OCI-LY7 (cell line): ENCODE measurements at regions of chr1 and their contacts with region 1.

Region 1: DNA sequence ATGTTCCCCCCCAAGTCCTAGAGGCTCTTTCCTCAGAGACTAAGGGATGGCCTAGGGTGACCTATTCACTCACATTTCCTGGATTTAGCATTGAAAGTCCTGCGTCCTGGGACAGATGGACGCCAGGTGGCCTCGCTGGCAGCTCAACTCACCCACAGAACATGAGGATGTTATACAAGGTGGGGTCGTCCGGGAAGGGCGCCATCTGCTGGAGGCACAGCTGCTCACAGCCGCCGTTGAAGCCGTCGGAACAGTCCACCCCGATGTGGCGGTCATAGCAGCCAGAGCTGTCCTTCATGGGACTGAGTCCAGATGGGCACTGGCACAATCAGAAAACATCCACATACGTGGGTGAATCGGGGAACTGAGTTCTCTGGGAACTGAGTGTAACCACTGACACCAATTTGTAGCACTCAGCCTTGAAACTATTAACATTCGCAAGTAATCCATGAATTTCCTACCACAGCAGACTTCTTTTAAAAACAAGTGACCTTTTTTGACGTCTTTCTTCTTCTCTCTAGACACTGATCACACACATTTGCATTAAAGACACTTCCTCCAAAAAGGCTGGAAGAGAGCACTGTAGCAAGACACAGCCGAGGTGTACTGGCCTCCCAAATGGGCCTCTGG is 215.4 kb downstream of the ASTN1 start:
- DNase-seq: peak; percentile 26
- H3K4me3 ChIP-seq: no peak overlapping the region
- H3K27ac ChIP-seq: no peak overlapping the region
- H3K4me1 ChIP-seq: no peaks in the 10 kb centered on the region
- CTCF ChIP-seq: peak; percentile 80

Region 2: GRCh38 chr1:176959191-176959820 is 10.2 kb after region 1 on chr1:
- CTCF ChIA-PET with region 1: no interaction called
- POLR2A ChIA-PET with region 1: no interaction called
- intact Hi-C with region 1: no loop called
- DNase-seq: no peak
- H3K4me3 ChIP-seq: no peak overlapping the region
- H3K27ac ChIP-seq: no peak overlapping the region
- H3K4me1 ChIP-seq: no peaks in the 10 kb centered on the region
- CTCF ChIP-seq: no peak

Region 3: DNA sequence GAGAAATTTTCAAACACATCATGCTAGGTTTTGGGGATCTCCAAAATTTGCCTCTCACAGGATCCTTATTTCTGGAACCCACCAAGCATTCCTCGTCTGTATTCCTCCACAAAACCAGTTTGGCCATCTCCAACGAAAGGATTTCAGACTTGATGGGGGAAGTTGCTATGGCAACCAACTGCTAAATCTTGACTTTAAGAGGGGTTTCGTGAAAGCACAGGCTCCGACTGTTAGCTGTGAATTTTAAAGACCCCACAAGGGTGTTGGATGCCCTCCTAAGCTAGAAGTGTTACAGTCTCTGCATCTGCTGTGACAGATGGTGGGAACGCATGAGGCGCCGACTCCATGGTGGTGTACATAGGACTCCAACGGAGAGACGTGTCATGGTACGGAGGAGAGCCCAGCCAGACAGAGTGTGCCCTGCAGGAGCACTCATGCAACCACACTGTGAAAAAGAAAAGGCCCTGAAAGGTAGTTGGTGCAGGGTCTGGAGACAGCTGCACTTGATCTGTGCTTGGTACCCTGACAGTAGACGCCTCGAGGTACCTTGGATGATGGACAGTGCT is 68.2 kb after region 1 on chr1:
- CTCF ChIA-PET with region 1: no interaction called
- POLR2A ChIA-PET with region 1: no interaction called
- intact Hi-C with region 1: no loop called
- DNase-seq: no peak
- H3K4me3 ChIP-seq: no peak overlapping the region
- H3K27ac ChIP-seq: no peak overlapping the region
- H3K4me1 ChIP-seq: no peaks in the 10 kb centered on the region
- CTCF ChIP-seq: no peak

Region 4: DNA sequence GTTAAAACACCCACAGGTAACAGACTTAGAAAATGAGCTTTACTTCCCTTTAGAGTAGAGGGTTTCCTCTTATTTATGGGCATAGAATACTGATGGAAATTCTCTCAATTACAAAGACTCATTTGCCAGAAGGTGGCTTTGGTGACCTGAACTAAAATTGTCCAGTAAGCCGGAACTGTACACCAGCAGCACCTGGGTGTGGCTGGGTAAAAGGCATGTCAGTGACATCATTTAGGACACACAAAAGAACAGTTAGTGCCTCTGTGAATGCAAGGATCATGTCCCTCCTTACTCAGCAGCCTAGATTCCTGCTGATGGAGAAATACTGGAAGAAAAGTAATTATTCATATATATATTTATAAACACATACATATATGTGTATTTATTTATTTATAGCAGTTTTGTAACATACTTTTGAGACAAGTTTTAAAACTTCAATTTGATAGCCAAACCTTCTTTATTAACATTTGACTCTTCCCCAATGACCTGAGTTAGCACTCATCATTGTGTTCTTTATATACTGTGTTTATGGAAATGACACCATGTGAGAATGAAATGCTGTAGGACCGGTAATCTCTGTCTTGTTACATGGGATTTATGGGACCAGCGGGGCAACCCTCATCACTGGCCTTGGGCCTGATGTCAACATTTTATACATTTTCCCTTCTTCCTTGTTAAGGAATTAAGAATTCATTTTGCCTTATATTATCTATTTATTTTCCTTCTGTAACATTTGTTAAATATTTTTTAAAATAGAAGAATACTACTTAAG is 496.0 kb after region 1 on chr1:
- CTCF ChIA-PET with region 1: interaction called, 10 read pairs
- POLR2A ChIA-PET with region 1: no interaction called
- intact Hi-C with region 1: no loop called
- DNase-seq: no peak
- H3K4me3 ChIP-seq: no peak overlapping the region
- H3K27ac ChIP-seq: no peak overlapping the region
- H3K4me1 ChIP-seq: no peaks in the 10 kb centered on the region
- CTCF ChIP-seq: no peak